A673 (cell line): ENCODE measurements at regions of chr1 and their contacts with region 1.

Region 1: DNA sequence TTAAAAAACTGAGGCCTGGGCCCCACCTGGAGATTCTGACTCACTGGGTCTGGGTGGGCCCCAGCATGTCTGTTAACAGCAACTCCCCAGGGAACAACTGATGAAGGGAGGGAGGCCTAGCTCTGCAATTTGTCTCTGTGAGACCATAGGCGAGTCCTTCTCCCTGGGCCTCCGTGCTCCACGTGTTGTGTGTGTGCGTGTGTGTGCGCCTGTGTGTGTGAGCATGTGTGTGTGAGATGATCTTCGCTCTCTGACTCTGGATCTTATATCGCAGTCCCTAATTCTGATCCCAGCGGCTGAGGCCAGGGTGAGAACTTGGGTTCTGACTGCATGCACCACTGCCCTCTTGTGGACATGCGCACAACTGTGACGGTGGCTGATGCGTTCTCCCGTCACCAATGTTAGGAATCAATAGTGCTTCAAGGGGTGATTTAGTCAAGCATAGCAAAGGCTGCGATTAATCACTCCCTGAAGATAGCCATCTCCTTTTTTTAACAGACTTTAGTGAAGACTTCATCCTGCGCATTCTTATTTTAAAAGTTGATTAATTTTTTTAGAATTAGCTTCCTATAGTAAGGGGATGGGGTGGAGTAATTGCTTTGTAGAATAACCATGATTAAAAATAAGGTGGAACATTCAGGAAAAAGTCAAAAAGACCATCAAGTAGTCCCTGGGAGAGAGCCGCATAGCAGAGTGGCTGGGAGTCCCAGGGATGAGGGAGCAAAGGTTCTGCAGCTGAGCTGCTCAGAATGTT is 62.4 kb upstream of the USP24 start:
- DNase-seq: peak; percentile 89
- H3K4me3 ChIP-seq: no peak overlapping the region
- H3K27ac ChIP-seq: no peak overlapping the region
- H3K4me1 ChIP-seq: peaks cover 8% of the 10 kb centered on the region
- H3K27me3 ChIP-seq: no peaks in the 10 kb centered on the region
- CTCF ChIP-seq: peak; percentile 90

Region 2: GRCh38 chr1:53909946-53910345 is 1367.6 kb before region 1 on chr1:
- CTCF ChIA-PET with region 1: interaction called, 14 read pairs
- POLR2A ChIA-PET with region 1: no interaction called
- intact Hi-C with region 1: no loop called
- DNase-seq: no peak
- H3K4me3 ChIP-seq: no peak overlapping the region
- H3K27ac ChIP-seq: no peak overlapping the region
- H3K4me1 ChIP-seq: no peaks in the 10 kb centered on the region
- H3K27me3 ChIP-seq: no peaks in the 10 kb centered on the region
- CTCF ChIP-seq: no peak

Region 3: DNA sequence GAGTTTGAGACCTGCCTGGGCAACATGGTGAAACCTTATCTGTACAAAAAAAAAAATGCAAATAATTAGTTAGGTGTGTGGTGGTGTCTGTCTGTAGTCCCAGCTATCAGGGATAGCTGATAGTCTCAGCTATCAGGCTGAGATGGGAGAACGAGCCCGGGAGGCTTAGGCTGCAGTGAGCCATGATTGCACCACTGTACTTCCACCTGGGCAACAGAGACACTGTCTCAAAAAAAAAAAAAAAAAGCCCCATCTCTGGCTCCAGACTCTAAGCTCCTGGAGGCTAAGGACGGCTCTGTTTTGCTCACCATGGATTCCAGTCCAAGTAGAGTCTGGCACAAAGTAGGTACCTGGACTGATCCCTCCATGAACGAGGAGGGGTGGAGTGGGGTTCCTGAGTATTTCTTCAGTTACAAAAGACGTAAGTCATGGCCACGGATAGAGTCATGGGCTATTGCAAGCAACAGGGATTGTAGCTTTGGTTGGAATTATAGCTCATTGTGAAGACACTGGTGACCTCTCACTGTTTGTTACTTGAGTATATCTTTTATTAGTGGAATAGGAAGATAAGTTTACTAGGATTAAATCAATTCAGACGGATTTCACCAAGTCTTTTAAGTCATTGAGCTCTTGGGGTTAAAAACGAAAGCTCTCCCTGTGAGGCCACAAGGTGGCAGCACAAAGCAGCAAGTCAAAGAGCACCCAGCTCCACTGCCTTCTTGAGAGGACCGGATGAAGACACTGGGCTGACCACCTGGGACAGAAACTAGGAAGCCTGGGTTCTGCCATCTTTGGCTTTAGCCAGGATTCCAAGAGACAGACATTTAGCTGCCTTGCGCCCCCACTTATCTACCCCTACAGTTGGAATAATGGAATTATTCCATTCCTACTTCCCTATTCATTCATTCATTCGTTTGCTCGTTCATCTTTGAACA is 332.7 kb before region 1 on chr1:
- CTCF ChIA-PET with region 1: no interaction called
- POLR2A ChIA-PET with region 1: no interaction called
- intact Hi-C with region 1: loop called (anchors 10 kb)
- DNase-seq: peak; percentile 85
- H3K4me3 ChIP-seq: peak overlapping the region; percentile 3
- H3K27ac ChIP-seq: no peak overlapping the region
- H3K4me1 ChIP-seq: peaks cover 10% of the 10 kb centered on the region
- H3K27me3 ChIP-seq: no peaks in the 10 kb centered on the region
- CTCF ChIP-seq: peak; percentile 91

Region 4: GRCh38 chr1:55071477-55071876 is 206.1 kb before region 1 on chr1:
- CTCF ChIA-PET with region 1: interaction called, 4 read pairs
- POLR2A ChIA-PET with region 1: no interaction called
- intact Hi-C with region 1: loop called (anchors 2 kb)
- DNase-seq: peak; percentile 52
- H3K4me3 ChIP-seq: no peak overlapping the region
- H3K27ac ChIP-seq: no peak overlapping the region
- H3K4me1 ChIP-seq: no peaks in the 10 kb centered on the region
- H3K27me3 ChIP-seq: no peaks in the 10 kb centered on the region
- CTCF ChIP-seq: peak; percentile 59

Region 5: DNA sequence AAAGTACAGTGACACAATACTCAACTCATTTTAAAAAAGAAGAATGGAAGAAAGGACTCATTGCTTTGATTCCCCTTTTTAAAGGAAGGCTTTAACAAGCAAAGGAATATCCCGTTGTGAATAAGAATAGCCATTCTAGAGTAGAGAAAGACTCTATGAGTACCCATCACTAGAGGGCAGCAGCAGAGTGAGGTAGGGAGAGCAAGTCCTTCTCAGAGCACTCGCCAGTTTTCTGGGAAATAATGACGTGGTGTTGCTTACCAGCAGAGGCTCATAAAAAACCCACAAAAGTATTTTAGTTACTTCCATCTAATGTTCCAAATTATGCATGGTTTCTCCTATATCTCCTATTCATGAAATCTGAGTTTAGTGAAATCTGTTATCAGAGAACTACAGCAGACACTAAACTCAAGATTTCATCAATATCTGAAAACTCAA is 137.0 kb before region 1 on chr1:
- CTCF ChIA-PET with region 1: interaction called, 3 read pairs
- POLR2A ChIA-PET with region 1: no interaction called
- intact Hi-C with region 1: loop called (anchors 1 kb)
- DNase-seq: peak; percentile 89
- H3K4me3 ChIP-seq: no peak overlapping the region
- H3K27ac ChIP-seq: no peak overlapping the region
- H3K4me1 ChIP-seq: no peaks in the 10 kb centered on the region
- H3K27me3 ChIP-seq: no peaks in the 10 kb centered on the region
- CTCF ChIP-seq: peak; percentile 87